H1 (cell line): ENCODE measurements at regions of chr12 and their contacts with region 1.

Region 1: DNA sequence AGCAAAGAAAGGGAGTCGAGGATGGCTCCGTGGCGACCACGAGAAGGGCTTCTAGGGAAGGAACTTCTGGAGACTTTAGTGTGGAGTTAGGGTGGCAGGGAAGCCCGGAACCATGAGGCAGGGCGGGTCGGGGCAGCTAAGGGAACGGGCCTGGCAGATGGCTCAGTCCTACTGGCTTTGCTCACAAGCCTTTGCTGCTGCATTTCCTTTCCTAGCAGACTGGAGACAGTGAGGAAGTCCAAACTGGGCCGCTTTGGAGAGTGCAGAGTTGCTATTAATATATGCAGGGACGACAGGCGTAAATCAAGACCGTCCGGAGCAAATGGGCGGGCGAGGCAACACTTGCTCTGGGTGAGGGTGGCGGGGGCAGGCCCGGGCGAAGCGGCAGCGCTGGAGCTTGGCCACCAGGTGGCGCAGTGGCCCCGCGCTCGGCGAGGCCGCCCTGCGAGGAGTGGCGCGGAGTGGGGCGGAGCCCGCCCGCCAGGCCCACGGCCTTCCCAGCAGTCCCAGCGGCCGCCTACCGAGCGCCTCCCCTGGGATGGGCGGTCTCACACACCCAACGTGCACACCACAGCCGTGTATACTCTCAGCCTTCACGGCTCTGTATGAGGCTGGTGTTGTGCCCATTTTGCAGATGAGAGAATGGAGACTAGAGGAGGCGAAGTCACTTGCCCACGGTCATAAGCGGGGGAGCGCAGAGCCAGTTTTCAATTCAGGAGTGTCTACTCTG is 24.4 kb upstream of the LRTM2 start:
- DNase-seq: peak; percentile 50 to 94
- H3K4me3 ChIP-seq: peak overlapping the region; percentile 31 to 70 (median 44); a peak in 7 of 8 replicates
- H3K27ac ChIP-seq: no peak overlapping the region
- H3K4me1 ChIP-seq: peaks cover 3 to 12% (median 4%) of the 10 kb centered on the region in 4 experiments; a peak in 6 of 7 replicates
- H3K27me3 ChIP-seq: peaks cover 1 to 11% (median 7%) of the 10 kb centered on the region in 4 experiments; a peak in 6 of 7 replicates
- CTCF ChIP-seq: peak in 2 of 3 experiments; percentile 89 to 92; a peak in 3 of 4 replicates
- EP300 ChIP-seq: no peak
- POLR2A ChIP-seq: no peak
- RAD21 ChIP-seq: peak; percentile 85 to 94

Region 2: DNA sequence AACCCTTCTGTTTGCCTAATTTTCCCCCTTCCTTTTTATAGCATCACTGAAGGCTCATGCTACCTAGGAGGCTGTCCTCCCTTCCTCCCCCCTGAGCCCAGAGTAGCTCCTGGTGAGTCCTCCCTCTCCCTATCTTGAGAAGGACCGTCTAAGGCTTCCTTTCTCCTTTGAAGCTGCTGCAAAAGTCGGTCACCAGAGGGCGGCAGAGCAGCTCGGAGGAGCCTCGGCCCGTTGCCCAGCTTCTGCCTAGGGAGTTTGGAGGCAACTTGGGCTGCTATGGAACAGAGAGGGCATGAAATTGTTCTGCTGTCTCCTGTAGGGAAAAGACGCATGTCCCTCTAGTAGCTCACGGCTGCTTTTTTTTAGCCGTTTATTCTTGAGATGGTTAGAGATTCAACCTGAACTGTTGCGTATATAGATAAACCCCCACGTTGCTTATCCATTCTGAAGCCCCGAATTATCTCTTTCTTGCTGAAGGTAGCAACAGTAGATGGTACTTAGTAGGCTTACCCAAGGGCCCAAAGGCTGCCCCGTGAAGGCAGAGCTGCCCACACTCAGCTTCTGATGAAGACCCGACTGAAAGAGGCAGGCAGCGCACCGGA is 161.3 kb before region 1 on chr12:
- CTCF ChIA-PET with region 1: interaction called, 40 read pairs
- POLR2A ChIA-PET with region 1: interaction called, 3 read pairs
- DNase-seq: peak; percentile 56 to 88
- H3K4me3 ChIP-seq: no peak overlapping the region
- H3K27ac ChIP-seq: no peak overlapping the region
- H3K4me1 ChIP-seq: peaks cover 2 to 18% (median 15%) of the 10 kb centered on the region in 4 experiments
- H3K27me3 ChIP-seq: peaks cover 31 to 61% (median 47%) of the 10 kb centered on the region in 4 experiments
- CTCF ChIP-seq: peak; percentile 82 to 89 (median 86)
- EP300 ChIP-seq: no peak
- POLR2A ChIP-seq: no peak
- RAD21 ChIP-seq: peak; percentile 79 to 88

Region 3: DNA sequence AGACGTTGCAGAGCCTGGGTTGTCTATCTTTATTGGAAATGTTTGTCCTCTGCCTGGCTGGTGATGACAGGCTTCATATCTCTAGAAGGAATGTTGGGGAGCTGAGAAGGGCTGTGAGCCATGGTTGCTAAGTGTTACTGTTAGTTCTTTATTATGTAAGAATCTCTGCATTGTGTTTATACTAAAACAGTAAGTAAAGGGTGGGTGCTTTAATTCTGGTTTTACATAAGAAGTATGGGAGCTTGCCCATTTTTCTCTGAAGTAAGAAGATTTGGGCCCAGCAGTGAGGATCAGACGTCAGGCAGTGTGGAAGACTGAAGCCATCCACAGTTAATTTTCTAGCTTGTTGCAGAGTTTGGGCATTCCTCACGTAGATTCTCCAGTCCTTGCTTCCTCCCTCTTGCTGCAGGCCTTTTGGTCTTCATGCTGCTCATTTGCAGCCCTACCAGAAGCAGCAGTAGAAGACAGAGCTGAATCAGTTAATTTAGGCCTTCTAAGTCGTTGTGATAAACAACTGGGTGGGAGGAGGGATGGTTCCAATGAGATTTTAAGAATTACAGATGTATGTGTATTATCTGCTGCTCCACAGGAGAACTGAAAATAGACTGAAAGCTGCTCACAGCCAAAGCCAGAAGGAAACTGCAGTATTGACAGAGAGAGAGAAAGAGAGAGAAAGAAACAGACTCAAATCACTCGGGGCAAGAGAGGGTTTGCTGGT is 145.5 kb before region 1 on chr12:
- CTCF ChIA-PET with region 1: interaction called, 265 read pairs
- POLR2A ChIA-PET with region 1: interaction called, 8 read pairs
- DNase-seq: no peak
- H3K4me3 ChIP-seq: no peak overlapping the region
- H3K27ac ChIP-seq: no peak overlapping the region
- H3K4me1 ChIP-seq: peaks cover 0 to 3% (median 0%) of the 10 kb centered on the region in 4 experiments; a peak in 2 of 7 replicates
- H3K27me3 ChIP-seq: peaks cover 0 to 1% (median 0%) of the 10 kb centered on the region in 4 experiments; a peak in 1 of 7 replicates
- CTCF ChIP-seq: no peak
- EP300 ChIP-seq: no peak
- POLR2A ChIP-seq: no peak
- RAD21 ChIP-seq: no peak

Region 4: GRCh38 chr12:1698638-1699214 is 97.2 kb before region 1 on chr12:
- CTCF ChIA-PET with region 1: interaction called, 25 read pairs
- POLR2A ChIA-PET with region 1: interaction called, 3 read pairs
- DNase-seq: no peak
- H3K4me3 ChIP-seq: no peak overlapping the region
- H3K27ac ChIP-seq: no peak overlapping the region
- H3K4me1 ChIP-seq: peaks cover 0 to 2% (median 0%) of the 10 kb centered on the region in 4 experiments; a peak in 1 of 7 replicates
- H3K27me3 ChIP-seq: no peaks in the 10 kb centered on the region
- CTCF ChIP-seq: no peak
- EP300 ChIP-seq: no peak
- POLR2A ChIP-seq: no peak
- RAD21 ChIP-seq: peak; percentile 23 to 34; a peak in 3 of 4 replicates

Region 5: GRCh38 chr12:1716215-1716862 is 79.6 kb before region 1 on chr12:
- CTCF ChIA-PET with region 1: interaction called, 14 read pairs
- POLR2A ChIA-PET with region 1: no interaction called
- DNase-seq: no peak
- H3K4me3 ChIP-seq: no peak overlapping the region
- H3K27ac ChIP-seq: no peak overlapping the region
- H3K4me1 ChIP-seq: no peaks in the 10 kb centered on the region; a peak in 1 of 7 replicates
- H3K27me3 ChIP-seq: no peaks in the 10 kb centered on the region
- CTCF ChIP-seq: no peak
- EP300 ChIP-seq: no peak
- POLR2A ChIP-seq: no peak
- RAD21 ChIP-seq: no peak

Region 6: GRCh38 chr12:1815814-1816729 is 20.1 kb after region 1 on chr12:
- CTCF ChIA-PET with region 1: interaction called, 13 read pairs
- POLR2A ChIA-PET with region 1: interaction called, 3 read pairs
- DNase-seq: no peak
- H3K4me3 ChIP-seq: no peak overlapping the region
- H3K27ac ChIP-seq: no peak overlapping the region
- H3K4me1 ChIP-seq: peaks cover 0 to 12% (median 3%) of the 10 kb centered on the region in 4 experiments; a peak in 5 of 7 replicates
- H3K27me3 ChIP-seq: peaks cover 8 to 22% (median 21%) of the 10 kb centered on the region in 4 experiments
- CTCF ChIP-seq: no peak
- EP300 ChIP-seq: no peak
- POLR2A ChIP-seq: no peak
- RAD21 ChIP-seq: no peak